ENCODE measurements at regions of chr10 and their contacts with region 1.

Region 1: DNA sequence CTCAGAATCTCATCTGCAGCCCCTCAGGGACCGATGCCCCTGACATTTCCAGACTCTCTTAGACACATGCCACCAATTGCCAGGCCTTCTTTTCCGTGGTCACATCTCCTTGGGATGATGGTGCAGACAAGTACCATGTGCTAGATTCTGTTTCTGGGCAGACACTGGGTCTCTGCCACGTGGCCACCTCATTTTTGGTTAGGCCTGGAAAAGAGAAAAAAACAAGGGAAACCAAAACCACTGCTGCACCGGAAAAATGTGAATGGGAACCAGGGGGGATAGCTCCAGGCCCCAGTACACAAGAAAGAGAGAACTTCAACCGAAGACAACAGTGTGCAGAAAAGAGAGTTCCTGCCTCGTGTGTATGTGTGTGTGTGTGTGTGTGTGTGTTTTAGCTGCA is 23.0 kb upstream of the MXI1 start:
- DNase-seq: no peak
- ATAC-seq: no peak
- H3K4me3 ChIP-seq: no peak overlapping the region
- H3K4me3 Mint-ChIP-seq: no peak overlapping the region
- H3K27ac ChIP-seq: no peak overlapping the region
- H3K27ac Mint-ChIP-seq: no peak overlapping the region
- H3K4me1 ChIP-seq: no peaks in the 10 kb centered on the region
- H3K4me1 Mint-ChIP-seq: no peaks in the 10 kb centered on the region
- H3K27me3 ChIP-seq: peaks cover 0 to 8% of the 10 kb centered on the region in 2 experiments
- H3K27me3 Mint-ChIP-seq: peaks cover 3% of the 10 kb centered on the region in 2 donors

Region 2: GRCh38 chr10:110168601-110169481 is 15.6 kb before region 1 on chr10:
- CTCF ChIA-PET with region 1: no interaction called
- POLR2A ChIA-PET with region 1: no interaction called
- DNase-seq: peak in 2 of 35 experiments; percentile 5 to 7
- ATAC-seq: peak in 2 of 4 experiments; percentile 60 to 62
- H3K4me3 ChIP-seq: no peak overlapping the region
- H3K4me3 Mint-ChIP-seq: no peak overlapping the region
- H3K27ac ChIP-seq: no peak overlapping the region
- H3K27ac Mint-ChIP-seq: peak overlapping the region in 1 of 2 donors; percentile 39
- H3K4me1 ChIP-seq: peaks cover 2 to 19% of the 10 kb centered on the region in 2 experiments
- H3K4me1 Mint-ChIP-seq: peaks cover 18 to 30% (median 29%) of the 10 kb centered on the region in 3 donors
- H3K27me3 ChIP-seq: peaks cover 19 to 76% of the 10 kb centered on the region in 2 experiments
- H3K27me3 Mint-ChIP-seq: peaks cover 67 to 81% of the 10 kb centered on the region in 2 donors

Region 3: GRCh38 chr10:110387983-110388687 is 203.7 kb after region 1 on chr10:
- CTCF ChIA-PET with region 1: no interaction called
- POLR2A ChIA-PET with region 1: interaction called in 1 of 2 experiments, 10 read pairs
- DNase-seq: peak in 17 of 35 experiments; percentile 3 to 31 (median 10)
- ATAC-seq: peak; percentile 40 to 77 (median 56)
- H3K4me3 ChIP-seq: no peak overlapping the region
- H3K4me3 Mint-ChIP-seq: peak overlapping the region in 1 of 3 donors; percentile 11
- H3K27ac ChIP-seq: no peak overlapping the region
- H3K27ac Mint-ChIP-seq: peak overlapping the region in 1 of 2 donors; percentile 11
- H3K4me1 ChIP-seq: peaks cover 2 to 14% of the 10 kb centered on the region in 2 experiments
- H3K4me1 Mint-ChIP-seq: peaks cover 14 to 18% (median 17%) of the 10 kb centered on the region in 3 donors
- H3K27me3 ChIP-seq: peaks cover 0 to 1% of the 10 kb centered on the region in 2 experiments
- H3K27me3 Mint-ChIP-seq: no peaks in the 10 kb centered on the region

Measured in T-cell (primary cell).